HEK293 (cell line): ENCODE measurements at regions of chr7 and their contacts with region 1.

Region 1: GRCh38 chr7:129298268-129298893 is 73.6 kb downstream of the AHCYL2 start:
- H3K4me3 ChIP-seq: no peak overlapping the region
- H3K27ac ChIP-seq: no peak overlapping the region
- H3K4me1 ChIP-seq: peaks cover 8% of the 10 kb centered on the region
- CTCF ChIP-seq: no peak

Region 2: GRCh38 chr7:129210256-129210988 is 88.0 kb before region 1 on chr7:
- CTCF ChIA-PET with region 1: interaction called, 17 read pairs
- POLR2A ChIA-PET with region 1: no interaction called
- H3K4me3 ChIP-seq: no peak overlapping the region
- H3K27ac ChIP-seq: no peak overlapping the region
- H3K4me1 ChIP-seq: no peaks in the 10 kb centered on the region
- CTCF ChIP-seq: peak; percentile 70

Region 3: DNA sequence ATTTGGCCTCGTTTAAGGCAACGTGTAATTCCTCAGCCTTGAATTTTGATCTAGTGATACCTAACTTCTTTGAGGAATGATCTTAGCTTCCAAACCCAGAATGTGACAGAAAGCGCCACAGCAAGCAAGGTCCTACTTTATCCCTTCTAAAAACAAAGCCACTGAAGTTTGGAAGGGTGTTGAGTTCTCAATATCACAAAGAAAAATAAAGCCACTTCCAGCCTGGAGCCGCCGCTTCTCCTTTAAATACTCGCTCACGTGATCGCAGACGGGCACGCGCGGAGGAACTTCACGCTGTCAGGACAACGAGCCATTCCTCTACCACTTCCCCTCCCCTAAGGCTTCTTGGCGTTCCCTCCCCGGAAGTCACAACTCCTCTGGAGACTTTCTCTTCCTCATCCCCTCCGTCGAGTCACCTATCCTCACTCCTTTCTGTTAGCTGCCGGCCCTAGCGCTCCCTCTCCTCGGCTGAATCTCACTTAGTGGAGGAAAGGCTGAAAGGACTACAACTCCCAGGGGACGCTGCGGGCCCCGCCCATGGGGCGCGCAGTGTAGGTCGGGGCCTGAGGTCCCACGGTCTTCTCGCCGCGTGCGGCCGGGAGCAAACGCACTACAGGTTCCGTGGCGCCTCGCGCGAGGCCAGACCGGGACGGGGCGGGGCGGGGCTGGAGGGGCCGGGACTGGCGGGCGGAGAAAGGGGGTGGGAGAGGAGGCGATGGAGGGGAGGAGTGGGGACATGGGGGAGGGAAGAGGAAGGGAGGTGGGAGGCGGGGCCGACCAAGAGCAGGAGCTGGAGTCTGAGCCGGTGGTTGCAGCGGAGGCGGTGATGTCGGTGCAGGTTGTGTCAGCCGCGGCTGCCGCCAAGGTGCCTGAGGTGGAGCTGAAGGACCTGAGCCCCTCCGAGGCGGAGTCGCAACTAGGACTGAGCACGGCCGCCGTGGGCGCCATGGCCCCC is 73.9 kb before region 1 on chr7 and contains the start of gene AHCYL2:
- CTCF ChIA-PET with region 1: interaction called, 51 read pairs
- POLR2A ChIA-PET with region 1: interaction called, 3 read pairs
- H3K4me3 ChIP-seq: peak within 1 kb of the TSS; percentile 85
- H3K27ac ChIP-seq: peak within 1 kb of the TSS; percentile 80
- H3K4me1 ChIP-seq: peaks cover 17% of the 10 kb centered on the region
- CTCF ChIP-seq: no peak

Region 4: DNA sequence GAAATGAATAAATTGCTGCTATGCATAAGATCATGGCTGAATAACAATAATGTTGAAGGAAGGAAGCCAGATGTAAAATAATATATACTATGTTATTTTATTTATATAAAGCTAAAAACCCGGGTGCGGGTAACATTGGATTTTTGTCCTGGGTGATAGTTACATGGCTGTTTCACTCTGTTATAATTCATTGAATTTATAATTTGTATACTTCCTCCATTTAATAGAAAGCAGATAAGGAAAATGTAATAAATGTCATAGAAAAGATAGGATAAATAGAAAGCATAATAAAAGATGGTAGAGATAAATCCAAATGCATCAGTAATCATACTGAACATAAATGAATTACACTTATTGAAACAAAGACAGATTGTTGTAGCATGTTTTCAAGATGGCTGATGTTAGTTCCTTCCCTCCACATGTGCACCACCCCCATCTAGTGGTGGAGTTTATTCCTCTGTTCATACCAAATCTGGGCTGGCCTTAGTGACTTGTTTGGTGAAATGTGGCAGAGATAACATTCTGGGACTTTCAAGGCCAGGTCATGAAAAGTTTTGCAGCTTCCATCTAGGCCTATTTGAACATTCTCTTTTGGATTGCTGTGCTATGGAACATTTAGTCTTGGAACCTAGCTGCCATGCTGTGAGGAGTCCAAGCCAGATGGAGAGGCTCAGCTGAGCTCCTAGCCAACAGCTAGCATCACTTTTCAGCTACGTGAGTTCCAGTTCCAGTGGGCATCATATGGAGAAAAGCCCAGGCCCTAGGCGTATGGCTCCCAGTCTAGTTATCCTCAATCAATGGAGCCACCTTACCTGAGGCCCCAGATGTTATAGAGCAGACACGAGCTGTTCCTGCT is 26.7 kb before region 1 on chr7:
- CTCF ChIA-PET with region 1: interaction called, 10 read pairs
- POLR2A ChIA-PET with region 1: no interaction called
- H3K4me3 ChIP-seq: no peak overlapping the region
- H3K27ac ChIP-seq: no peak overlapping the region
- H3K4me1 ChIP-seq: no peaks in the 10 kb centered on the region
- CTCF ChIP-seq: 0 out of 2 replicates have a peak, but pooled peaks have one; percentile 31

Region 5: DNA sequence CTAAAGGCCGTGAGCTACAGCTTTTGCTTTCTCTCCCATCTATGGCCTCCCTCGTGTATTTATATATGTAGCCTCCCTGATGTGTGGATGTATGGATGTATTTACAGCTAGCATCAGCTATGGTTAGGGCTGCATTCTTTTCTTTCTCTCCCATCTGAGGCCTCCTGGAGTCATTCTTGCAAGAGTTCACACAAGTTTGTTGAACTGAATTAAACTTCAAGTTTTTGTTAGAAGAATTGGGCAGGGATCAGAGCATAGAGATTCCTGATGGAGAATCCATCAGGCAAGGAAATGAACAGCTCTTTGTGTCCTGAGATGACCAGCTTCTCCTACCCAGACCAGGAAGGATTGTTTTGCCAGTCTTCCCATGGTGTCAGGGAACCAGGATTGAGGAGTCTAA is 13.3 kb before region 1 on chr7:
- CTCF ChIA-PET with region 1: interaction called, 20 read pairs
- POLR2A ChIA-PET with region 1: no interaction called
- H3K4me3 ChIP-seq: no peak overlapping the region
- H3K27ac ChIP-seq: no peak overlapping the region
- H3K4me1 ChIP-seq: no peaks in the 10 kb centered on the region
- CTCF ChIP-seq: no peak